ENCODE measurements at regions of chr9 and their contacts with region 1.

Region 1: GRCh38 chr9:806285-807156 is 35.0 kb upstream of the DMRT1 start:
- DNase-seq: peak; percentile 54
- ATAC-seq: 0 out of 2 replicates have a peak, but pooled peaks have one; percentile 17
- H3K4me3 ChIP-seq: no peak overlapping the region
- H3K27ac ChIP-seq: no peak overlapping the region
- H3K4me1 ChIP-seq: peaks cover 12% of the 10 kb centered on the region; the same call in 1 of the 2 replicates
- H3K27me3 ChIP-seq: no peaks in the 10 kb centered on the region
- CTCF ChIP-seq: peak; percentile 70

Region 2: DNA sequence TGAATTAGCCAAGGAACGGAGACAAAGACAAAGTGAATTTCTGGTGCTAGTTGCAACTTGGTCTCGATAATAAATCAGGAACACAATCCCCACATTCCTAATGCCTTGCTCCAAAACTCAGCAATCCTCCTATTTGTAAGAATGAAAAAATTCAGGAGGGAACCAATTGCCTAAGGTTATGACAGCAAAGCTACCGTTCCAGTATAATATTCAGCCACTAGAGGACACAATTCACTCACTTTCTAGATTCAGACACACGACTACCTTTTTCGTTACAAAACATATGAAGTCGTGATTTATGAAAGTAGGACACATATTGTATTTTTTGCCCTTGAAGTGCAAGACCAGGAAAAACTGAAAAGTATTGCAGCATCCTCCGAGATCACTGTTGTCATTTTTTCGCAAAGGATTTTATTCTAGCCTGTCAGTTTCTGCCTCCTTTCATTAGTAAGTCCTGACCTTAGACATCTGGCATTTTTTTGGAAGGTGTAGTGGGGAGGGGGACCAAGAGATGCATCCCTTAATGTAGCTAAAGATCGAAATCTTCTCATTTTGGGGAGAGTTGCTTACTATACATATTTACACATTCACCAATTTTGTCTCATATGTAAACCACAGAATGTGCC is 458.7 kb before region 1 on chr9:
- CTCF ChIA-PET with region 1: no interaction called
- POLR2A ChIA-PET with region 1: no interaction called
- intact Hi-C with region 1: loop called (anchors 1 kb)
- DNase-seq: peak; percentile 71
- ATAC-seq: peak; percentile 66
- H3K4me3 ChIP-seq: no peak overlapping the region
- H3K27ac ChIP-seq: no peak overlapping the region
- H3K4me1 ChIP-seq: no peaks in the 10 kb centered on the region
- H3K27me3 ChIP-seq: no peaks in the 10 kb centered on the region
- CTCF ChIP-seq: peak; percentile 84

Region 3: DNA sequence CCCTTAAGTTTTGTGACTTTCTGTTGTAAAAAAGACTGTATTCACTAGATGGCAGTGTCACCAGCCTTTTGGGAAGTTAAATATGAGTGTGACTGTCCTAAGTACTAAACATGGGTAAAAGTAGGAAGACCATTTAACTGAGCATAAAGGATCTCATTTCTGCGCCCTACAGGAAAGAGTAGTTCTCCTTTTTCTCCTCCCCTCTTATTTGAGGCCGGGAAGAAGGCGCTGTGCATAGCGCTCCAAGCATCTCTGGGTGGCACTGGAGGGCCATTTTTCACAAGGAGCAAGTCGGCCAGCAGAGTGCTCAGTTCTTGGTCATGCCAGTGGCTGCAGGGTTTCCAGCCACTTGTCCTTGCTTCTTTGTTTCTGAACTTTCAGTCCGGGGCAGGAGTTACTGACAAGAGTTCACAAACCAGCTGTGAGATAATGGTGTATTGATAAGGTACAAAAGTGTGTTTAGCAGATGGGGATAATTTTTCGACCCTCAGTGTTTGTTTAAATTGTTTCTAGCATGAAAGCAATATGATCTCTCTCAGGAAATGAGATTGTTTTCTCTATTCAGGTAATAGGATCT is 192.7 kb before region 1 on chr9:
- CTCF ChIA-PET with region 1: interaction called, 3 read pairs
- POLR2A ChIA-PET with region 1: no interaction called
- intact Hi-C with region 1: loop called (anchors 2 kb)
- DNase-seq: peak; percentile 77
- ATAC-seq: peak; percentile 97
- H3K4me3 ChIP-seq: no peak overlapping the region
- H3K27ac ChIP-seq: no peak overlapping the region
- H3K4me1 ChIP-seq: peaks cover 4% of the 10 kb centered on the region; the same call in 1 of the 2 replicates
- H3K27me3 ChIP-seq: no peaks in the 10 kb centered on the region
- CTCF ChIP-seq: peak; percentile 94

Region 4: DNA sequence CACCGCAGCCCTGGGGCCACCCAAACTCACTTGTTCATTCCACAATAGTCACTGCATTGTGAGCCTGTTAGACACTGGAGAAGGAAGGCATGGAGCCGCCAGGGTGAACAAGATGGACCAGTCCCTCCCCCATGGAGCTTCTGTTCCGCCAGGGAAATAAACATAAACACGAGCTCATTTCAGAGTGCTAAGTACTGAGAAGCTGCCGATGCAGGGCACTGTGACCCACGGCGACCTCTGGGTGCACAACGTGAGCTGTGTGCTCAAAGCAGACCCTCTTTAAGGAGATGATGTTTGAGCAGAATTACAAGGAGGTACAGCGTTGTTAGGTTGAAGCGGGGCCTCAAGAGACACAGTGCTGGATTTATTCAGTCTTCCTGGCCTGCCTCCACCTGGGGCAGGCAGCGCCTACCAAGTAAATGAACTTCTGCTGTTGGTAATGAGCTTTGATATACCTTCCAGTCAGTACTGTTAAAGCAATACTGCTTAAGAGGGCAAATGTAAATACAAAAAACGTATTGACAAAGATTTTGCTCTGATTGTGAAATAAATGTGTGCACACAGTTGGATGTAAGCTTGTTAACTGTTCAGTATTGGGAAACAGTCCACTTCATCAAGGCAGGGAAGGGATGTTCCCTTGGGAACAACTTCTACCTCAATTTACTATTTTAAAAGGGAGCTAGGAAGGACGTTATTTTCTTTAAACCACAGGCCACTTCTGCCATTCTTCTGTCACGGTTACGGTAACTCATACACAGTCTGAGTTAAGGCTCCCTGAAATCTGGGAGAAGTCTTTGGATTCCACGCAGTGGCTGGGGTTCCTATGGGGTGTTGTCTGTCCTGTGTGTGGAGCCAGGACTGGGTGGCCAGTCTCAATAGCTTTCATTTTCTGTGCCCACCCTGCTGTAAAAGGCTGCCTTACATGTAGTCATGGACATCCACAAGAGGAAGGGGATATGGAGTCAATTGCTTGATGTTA is 13.9 kb before region 1 on chr9:
- CTCF ChIA-PET with region 1: no interaction called
- POLR2A ChIA-PET with region 1: interaction called, 16 read pairs
- intact Hi-C with region 1: no loop called
- DNase-seq: no peak
- ATAC-seq: no peak
- H3K4me3 ChIP-seq: no peak overlapping the region
- H3K27ac ChIP-seq: no peak overlapping the region
- H3K4me1 ChIP-seq: no peaks in the 10 kb centered on the region
- H3K27me3 ChIP-seq: no peaks in the 10 kb centered on the region
- CTCF ChIP-seq: no peak

Region 5: GRCh38 chr9:922171-922570 is 115.7 kb after region 1 on chr9:
- CTCF ChIA-PET with region 1: no interaction called
- POLR2A ChIA-PET with region 1: no interaction called
- intact Hi-C with region 1: no loop called
- DNase-seq: no peak
- ATAC-seq: no peak
- H3K4me3 ChIP-seq: no peak overlapping the region
- H3K27ac ChIP-seq: no peak overlapping the region
- H3K4me1 ChIP-seq: no peaks in the 10 kb centered on the region
- H3K27me3 ChIP-seq: peaks cover 13% of the 10 kb centered on the region
- CTCF ChIP-seq: no peak

Region 6: GRCh38 chr9:935344-935965 is 128.9 kb after region 1 on chr9:
- CTCF ChIA-PET with region 1: no interaction called
- POLR2A ChIA-PET with region 1: no interaction called
- intact Hi-C with region 1: no loop called
- DNase-seq: peak; percentile 46
- ATAC-seq: 0 out of 2 replicates have a peak, but pooled peaks have one; percentile 13
- H3K4me3 ChIP-seq: 0 out of 2 replicates have a peak overlapping the region, but pooled peaks have one; percentile 7
- H3K27ac ChIP-seq: no peak overlapping the region
- H3K4me1 ChIP-seq: 0 out of 2 replicates have a peak, but pooled peaks cover 7% of the 10 kb centered on the region
- H3K27me3 ChIP-seq: peaks cover 40% of the 10 kb centered on the region
- CTCF ChIP-seq: no peak

Measured in PC-3 (cell line).